ENCODE measurements at regions of chr9 and their contacts with region 1.

Region 1: DNA sequence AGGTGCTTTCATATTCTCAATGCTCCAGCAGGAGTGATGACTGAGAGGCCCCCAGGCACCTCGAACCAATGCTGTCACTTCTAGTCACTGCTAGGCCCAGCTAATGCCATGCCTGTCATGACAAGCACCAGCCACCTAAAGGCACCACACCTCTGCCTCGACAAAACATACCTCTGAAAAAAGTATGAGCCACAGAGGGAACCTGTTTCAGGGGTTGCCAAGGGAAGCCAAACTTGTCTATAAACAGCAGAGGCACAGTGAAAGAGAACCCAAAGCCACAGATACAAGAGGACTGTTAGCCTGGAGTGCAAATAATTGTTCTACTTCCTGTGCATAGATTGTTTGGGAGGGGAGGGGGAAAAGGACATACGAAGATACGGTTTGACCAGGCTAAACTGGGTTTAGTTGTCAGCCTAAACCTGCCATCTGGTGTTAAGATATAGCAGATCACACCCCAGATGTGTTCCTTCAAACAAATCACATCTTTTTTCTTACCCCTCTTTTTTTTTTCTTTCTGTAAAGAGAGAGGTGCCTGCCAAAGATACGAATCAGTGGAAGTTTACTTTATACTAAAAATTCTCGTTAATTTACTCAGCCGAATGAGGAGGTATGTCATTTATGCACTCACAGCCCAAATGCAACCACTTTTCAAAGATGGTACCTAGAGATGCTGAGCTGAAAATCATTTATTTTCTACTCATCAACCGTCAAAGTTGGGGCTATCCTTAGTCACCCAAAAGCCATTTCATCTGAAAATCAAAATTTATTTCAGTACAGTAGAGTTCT is 45.7 kb downstream of the BNC2 start:
- DNase-seq: peak; percentile 54
- ATAC-seq: peak; percentile 53
- H3K4me3 ChIP-seq: no peak overlapping the region
- H3K27ac ChIP-seq: 0 out of 2 replicates have a peak overlapping the region, but pooled peaks have one; percentile 9
- H3K4me1 ChIP-seq: peaks cover 33% of the 10 kb centered on the region
- H3K27me3 ChIP-seq: no peaks in the 10 kb centered on the region
- CTCF ChIP-seq: peak; percentile 36; the same call in 1 of the 2 replicates

Region 2: DNA sequence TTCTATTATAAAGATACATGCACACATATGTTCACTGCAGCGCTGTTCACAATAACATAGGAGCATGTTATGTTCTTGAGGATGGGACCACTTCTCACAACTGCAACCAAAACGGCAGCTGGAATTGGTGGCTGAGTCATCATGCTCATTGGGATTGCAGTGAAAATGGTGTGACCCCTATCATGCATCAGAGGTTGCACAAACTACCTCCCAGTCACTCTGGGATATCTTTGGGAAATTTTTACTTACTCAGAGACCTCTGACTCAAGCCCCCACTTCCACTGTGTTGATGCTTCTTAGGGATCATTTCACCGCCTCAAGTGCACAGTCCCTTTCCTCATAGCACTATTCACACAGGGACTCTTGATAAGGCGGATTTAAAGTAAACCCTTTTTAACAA is 428.3 kb before region 1 on chr9:
- CTCF ChIA-PET with region 1: no interaction called
- POLR2A ChIA-PET with region 1: interaction called, 14 read pairs
- intact Hi-C with region 1: no loop called
- DNase-seq: no peak
- ATAC-seq: no peak
- H3K4me3 ChIP-seq: no peak overlapping the region
- H3K27ac ChIP-seq: no peak overlapping the region
- H3K4me1 ChIP-seq: peaks cover 20% of the 10 kb centered on the region
- H3K27me3 ChIP-seq: no peaks in the 10 kb centered on the region
- CTCF ChIP-seq: no peak

Region 3: GRCh38 chr9:16690628-16691027 is 134.1 kb before region 1 on chr9:
- CTCF ChIA-PET with region 1: no interaction called
- POLR2A ChIA-PET with region 1: interaction called, 20 read pairs
- intact Hi-C with region 1: no loop called
- DNase-seq: no peak
- ATAC-seq: no peak
- H3K4me3 ChIP-seq: no peak overlapping the region
- H3K27ac ChIP-seq: no peak overlapping the region
- H3K4me1 ChIP-seq: peaks cover 7% of the 10 kb centered on the region; the same call in 1 of the 2 replicates
- H3K27me3 ChIP-seq: no peaks in the 10 kb centered on the region
- CTCF ChIP-seq: no peak